B cell (primary cell): ENCODE measurements at regions of chr2 and their contacts with region 1.

Region 1: GRCh38 chr2:238239872-238240751 is at the start of gene HES6:
- DNase-seq: peak; percentile 86
- ATAC-seq: peak; percentile 83
- H3K4me3 ChIP-seq: peak within 1 kb of the TSS; percentile 38 to 76 (median 58)
- H3K4me3 Mint-ChIP-seq: peak within 1 kb of the TSS; percentile 94
- H3K27ac ChIP-seq: no peak within 1 kb of the TSS
- H3K27ac Mint-ChIP-seq: peak within 1 kb of the TSS; percentile 82
- H3K4me1 ChIP-seq: peaks cover 14 to 15% of the 10 kb centered on the region in 2 donors
- H3K4me1 Mint-ChIP-seq: peaks cover 15% of the 10 kb centered on the region
- H3K27me3 ChIP-seq: peaks cover 0 to 45% (median 16%) of the 10 kb centered on the region in 4 experiments
- H3K27me3 Mint-ChIP-seq: peaks cover 13% of the 10 kb centered on the region
- CTCF ChIP-seq: no peak
- total RNA-seq, gene HES6: 8.8 and 14.3 TPM in 2 replicates

Region 2: DNA sequence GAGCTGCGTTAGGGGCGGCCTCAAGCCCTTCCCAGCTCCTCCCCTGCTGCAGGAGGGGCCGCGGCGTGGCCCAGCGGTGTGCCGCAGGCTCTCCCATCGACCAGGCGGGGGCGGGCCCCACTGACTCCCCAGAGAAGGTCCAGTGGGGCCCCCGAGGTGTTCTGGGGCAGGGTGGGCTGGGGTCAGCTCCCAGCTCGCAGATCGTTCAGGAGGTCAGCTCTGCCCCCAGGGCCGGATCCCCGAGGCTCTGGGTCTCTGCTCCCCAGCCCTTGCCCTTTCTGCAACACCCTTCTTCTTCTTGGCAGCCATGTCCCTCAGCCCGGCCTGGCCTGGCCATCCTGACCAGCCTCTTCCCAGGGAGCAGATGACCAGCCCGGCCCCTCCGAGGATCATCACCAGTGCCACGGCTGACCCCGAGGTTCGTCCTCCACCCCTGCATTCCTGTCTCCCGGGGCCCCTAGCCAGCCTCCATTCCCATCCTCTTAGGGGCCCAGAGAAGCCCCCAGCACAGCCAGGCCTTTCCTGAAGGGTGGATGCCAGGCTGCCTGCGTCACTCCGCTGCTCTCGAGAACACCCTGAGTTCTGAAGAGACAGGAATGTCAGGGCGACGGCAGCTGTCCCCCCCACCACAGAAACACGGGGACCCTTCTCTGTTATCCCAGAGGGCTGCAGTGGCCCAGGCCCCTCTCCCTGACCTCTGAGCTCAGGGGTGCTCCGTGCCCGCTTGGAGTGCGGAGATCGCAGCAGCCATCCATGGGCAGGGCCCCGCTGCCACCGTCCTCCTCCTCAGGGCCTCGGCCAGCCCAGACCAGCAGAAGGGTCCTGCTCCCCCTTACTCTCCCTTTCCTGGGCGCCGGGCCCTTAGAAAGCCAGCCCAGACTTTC is 112.6 kb before region 1 on chr2:
- CTCF ChIA-PET with region 1: no interaction called
- POLR2A ChIA-PET with region 1: no interaction called
- intact Hi-C with region 1: no loop called
- DNase-seq: no peak
- ATAC-seq: peak; percentile 67
- H3K4me3 ChIP-seq: no peak overlapping the region
- H3K4me3 Mint-ChIP-seq: no peak overlapping the region
- H3K27ac ChIP-seq: no peak overlapping the region
- H3K27ac Mint-ChIP-seq: no peak overlapping the region
- H3K4me1 ChIP-seq: peaks cover 0 to 5% of the 10 kb centered on the region in 2 donors
- H3K4me1 Mint-ChIP-seq: no peaks in the 10 kb centered on the region
- H3K27me3 ChIP-seq: no peaks in the 10 kb centered on the region
- H3K27me3 Mint-ChIP-seq: no peaks in the 10 kb centered on the region
- CTCF ChIP-seq: no peak

Region 3: DNA sequence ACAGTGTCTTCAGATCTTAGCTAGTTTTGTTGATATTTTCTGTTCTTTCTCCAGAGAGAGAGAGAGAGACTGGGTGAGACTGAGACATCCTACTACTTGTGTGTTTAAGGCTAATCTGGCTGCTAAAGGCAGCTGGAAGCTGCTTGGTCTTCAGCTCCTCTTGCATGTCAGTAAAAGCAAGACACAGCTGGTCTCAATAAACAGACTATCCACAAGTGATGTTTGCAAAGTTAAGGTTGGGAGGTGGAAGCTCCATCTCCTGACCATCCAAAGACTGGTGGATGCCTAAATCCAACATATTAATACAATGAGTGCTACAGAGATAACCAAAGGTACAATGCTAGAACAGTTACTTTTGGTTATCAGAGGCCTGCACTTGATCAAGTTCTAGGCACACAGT is 63.5 kb before region 1 on chr2:
- CTCF ChIA-PET with region 1: no interaction called
- POLR2A ChIA-PET with region 1: no interaction called
- intact Hi-C with region 1: no loop called
- DNase-seq: no peak
- ATAC-seq: no peak
- H3K4me3 ChIP-seq: no peak overlapping the region
- H3K4me3 Mint-ChIP-seq: no peak overlapping the region
- H3K27ac ChIP-seq: no peak overlapping the region
- H3K27ac Mint-ChIP-seq: no peak overlapping the region
- H3K4me1 ChIP-seq: no peaks in the 10 kb centered on the region
- H3K4me1 Mint-ChIP-seq: no peaks in the 10 kb centered on the region
- H3K27me3 ChIP-seq: no peaks in the 10 kb centered on the region
- H3K27me3 Mint-ChIP-seq: no peaks in the 10 kb centered on the region
- CTCF ChIP-seq: no peak

Region 4: GRCh38 chr2:238203094-238203972 is 36.8 kb before region 1 on chr2 and contains the start of gene ILKAP:
- CTCF ChIA-PET with region 1: no interaction called
- POLR2A ChIA-PET with region 1: interaction called, 9 read pairs
- intact Hi-C with region 1: loop called (anchors 1 kb)
- DNase-seq: peak; percentile 93
- ATAC-seq: peak; percentile 97
- H3K4me3 ChIP-seq: peak within 1 kb of the TSS; percentile 46 to 72 (median 58)
- H3K4me3 Mint-ChIP-seq: peak within 1 kb of the TSS; percentile 86
- H3K27ac ChIP-seq: peak within 1 kb of the TSS; percentile 78 to 93
- H3K27ac Mint-ChIP-seq: peak within 1 kb of the TSS; percentile 91
- H3K4me1 ChIP-seq: peaks cover 23 to 31% of the 10 kb centered on the region in 2 donors
- H3K4me1 Mint-ChIP-seq: peaks cover 47% of the 10 kb centered on the region
- H3K27me3 ChIP-seq: peaks cover 0 to 8% (median 0%) of the 10 kb centered on the region in 4 experiments
- H3K27me3 Mint-ChIP-seq: no peaks in the 10 kb centered on the region
- CTCF ChIP-seq: no peak
- total RNA-seq, gene ILKAP: 98.6 and 102 TPM in 2 replicates

Region 5: GRCh38 chr2:238320246-238320647 is 80.1 kb after region 1 on chr2 and contains the start of gene TRAF3IP1:
- CTCF ChIA-PET with region 1: no interaction called
- POLR2A ChIA-PET with region 1: no interaction called
- intact Hi-C with region 1: loop called (anchors 5 kb)
- DNase-seq: peak; percentile 90
- ATAC-seq: peak; percentile 98
- H3K4me3 ChIP-seq: peak within 1 kb of the TSS; percentile 19 to 74 (median 53)
- H3K4me3 Mint-ChIP-seq: peak within 1 kb of the TSS; percentile 85
- H3K27ac ChIP-seq: no peak within 1 kb of the TSS
- H3K27ac Mint-ChIP-seq: peak within 1 kb of the TSS; percentile 70
- H3K4me1 ChIP-seq: peaks cover 12 to 16% of the 10 kb centered on the region in 2 donors
- H3K4me1 Mint-ChIP-seq: peaks cover 15% of the 10 kb centered on the region
- H3K27me3 ChIP-seq: peaks cover 0 to 3% (median 0%) of the 10 kb centered on the region in 4 experiments
- H3K27me3 Mint-ChIP-seq: peaks cover 9% of the 10 kb centered on the region
- CTCF ChIP-seq: no peak
- total RNA-seq, gene TRAF3IP1: 15.2 and 15.5 TPM in 2 replicates

Region 6: DNA sequence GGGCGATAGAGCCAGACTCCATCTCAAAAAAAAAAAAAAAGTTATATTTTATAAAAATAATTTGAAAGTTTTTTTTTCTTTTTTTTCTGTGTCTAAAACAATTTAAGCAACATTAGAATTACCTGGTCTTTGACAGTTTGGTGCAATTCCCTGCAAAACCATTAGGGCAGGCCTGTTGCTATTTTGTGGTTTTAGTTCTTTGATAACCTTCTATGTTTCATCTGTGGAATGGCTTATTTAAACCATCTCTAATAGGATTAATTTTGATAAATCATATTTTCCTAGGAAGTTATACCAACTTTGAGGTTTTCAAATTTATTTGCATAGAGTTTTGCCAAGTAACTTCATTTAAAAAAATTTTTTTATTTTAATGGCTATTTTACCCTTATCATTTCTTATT is 466.6 kb after region 1 on chr2:
- CTCF ChIA-PET with region 1: no interaction called
- POLR2A ChIA-PET with region 1: no interaction called
- intact Hi-C with region 1: no loop called
- DNase-seq: no peak
- ATAC-seq: no peak
- H3K4me3 ChIP-seq: no peak overlapping the region
- H3K4me3 Mint-ChIP-seq: no peak overlapping the region
- H3K27ac ChIP-seq: no peak overlapping the region
- H3K27ac Mint-ChIP-seq: no peak overlapping the region
- H3K4me1 ChIP-seq: no peaks in the 10 kb centered on the region
- H3K4me1 Mint-ChIP-seq: no peaks in the 10 kb centered on the region
- H3K27me3 ChIP-seq: no peaks in the 10 kb centered on the region
- H3K27me3 Mint-ChIP-seq: peaks cover 16% of the 10 kb centered on the region
- CTCF ChIP-seq: no peak